Naive thymus-derived CD4-positive, alpha-beta T cell (primary cell): ENCODE measurements at regions of chr17 and their contacts with region 1.

Region 1: DNA sequence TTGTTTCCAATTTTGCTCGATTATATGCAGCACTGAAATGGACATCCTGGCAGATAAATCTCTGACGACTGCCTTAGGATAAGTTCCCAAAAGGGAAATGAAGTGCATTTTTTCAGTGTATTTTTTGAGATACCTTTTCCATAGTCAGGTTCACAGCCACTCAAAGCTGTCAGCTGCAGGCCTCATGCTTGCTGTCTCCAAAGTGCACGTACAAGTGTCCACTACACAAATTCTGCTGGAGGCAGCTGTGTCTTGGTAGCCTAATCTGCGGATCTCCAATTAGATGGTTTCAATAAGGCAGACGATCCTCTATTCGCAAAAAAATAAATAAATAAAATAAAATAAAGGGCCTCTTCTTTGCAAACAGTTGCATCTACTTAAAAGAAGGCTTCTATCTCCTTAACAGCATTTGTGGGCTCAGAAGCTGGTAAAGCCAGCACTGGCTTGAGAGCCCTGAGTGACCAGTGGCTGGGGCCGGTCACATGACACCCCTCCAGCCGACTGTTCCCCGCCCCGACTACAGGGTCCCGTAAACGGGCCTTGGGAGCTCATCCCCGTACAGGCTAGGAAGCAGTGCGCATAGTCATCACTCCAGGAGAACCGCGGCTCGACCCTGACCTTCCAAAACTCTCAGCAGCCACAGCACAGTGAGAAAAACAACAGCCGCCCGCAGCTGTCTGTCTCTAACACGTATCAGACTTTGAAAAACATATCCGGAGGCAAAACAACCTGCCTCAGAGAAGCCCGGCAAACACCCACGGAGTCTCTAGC is 18.8 kb downstream of the RPH3AL start:
- DNase-seq: peak in 5 of 9 donors; percentile 34 to 60 (median 35)
- ATAC-seq: peak; percentile 40
- H3K4me3 ChIP-seq: no peak overlapping the region
- H3K4me3 Mint-ChIP-seq: peak overlapping the region in 8 of 10 donors; percentile 52 to 91 (median 81)
- H3K27ac ChIP-seq: peak overlapping the region; percentile 65
- H3K27ac Mint-ChIP-seq: peak overlapping the region in 7 of 9 donors; percentile 93 to 98 (median 95)
- H3K4me1 ChIP-seq: peaks cover 0 to 51% of the 10 kb centered on the region in 2 donors
- H3K4me1 Mint-ChIP-seq: peaks cover 14 to 86% (median 34%) of the 10 kb centered on the region in 7 donors
- H3K27me3 ChIP-seq: no peaks in the 10 kb centered on the region
- H3K27me3 Mint-ChIP-seq: peaks cover 0 to 32% (median 15%) of the 10 kb centered on the region in 5 donors

Region 2: GRCh38 chr17:259991-260791 is 73.6 kb before region 1 on chr17:
- CTCF ChIA-PET with region 1: no interaction called
- POLR2A ChIA-PET with region 1: no interaction called
- intact Hi-C with region 1: no loop called
- DNase-seq: peak in 1 of 9 donors; percentile 15
- ATAC-seq: no peak
- H3K4me3 ChIP-seq: no peak overlapping the region
- H3K4me3 Mint-ChIP-seq: no peak overlapping the region
- H3K27ac ChIP-seq: no peak overlapping the region
- H3K27ac Mint-ChIP-seq: peak overlapping the region in 1 of 9 donors; percentile 55
- H3K4me1 ChIP-seq: no peaks in the 10 kb centered on the region
- H3K4me1 Mint-ChIP-seq: peaks cover 0 to 3% (median 0%) of the 10 kb centered on the region in 7 donors
- H3K27me3 ChIP-seq: no peaks in the 10 kb centered on the region
- H3K27me3 Mint-ChIP-seq: peaks cover 0 to 11% (median 2%) of the 10 kb centered on the region in 5 donors

Region 3: GRCh38 chr17:313911-314613 is 19.7 kb before region 1 on chr17:
- CTCF ChIA-PET with region 1: interaction called, 3 read pairs
- POLR2A ChIA-PET with region 1: no interaction called
- intact Hi-C with region 1: loop called in 1 of 2 experiments (anchors 2 kb)
- DNase-seq: peak in 2 of 9 donors; percentile 14 to 26
- ATAC-seq: no peak
- H3K4me3 ChIP-seq: no peak overlapping the region
- H3K4me3 Mint-ChIP-seq: no peak overlapping the region
- H3K27ac ChIP-seq: no peak overlapping the region
- H3K27ac Mint-ChIP-seq: no peak overlapping the region
- H3K4me1 ChIP-seq: no peaks in the 10 kb centered on the region
- H3K4me1 Mint-ChIP-seq: peaks cover 0 to 6% (median 0%) of the 10 kb centered on the region in 7 donors
- H3K27me3 ChIP-seq: no peaks in the 10 kb centered on the region
- H3K27me3 Mint-ChIP-seq: no peaks in the 10 kb centered on the region

Region 4: GRCh38 chr17:364766-365165 is 31.0 kb after region 1 on chr17:
- CTCF ChIA-PET with region 1: interaction called, 4 read pairs
- POLR2A ChIA-PET with region 1: no interaction called
- intact Hi-C with region 1: loop called in 1 of 2 experiments (anchors 5 kb)
- DNase-seq: no peak
- ATAC-seq: no peak
- H3K4me3 ChIP-seq: no peak overlapping the region
- H3K4me3 Mint-ChIP-seq: peak overlapping the region in 6 of 10 donors; percentile 22 to 56 (median 30)
- H3K27ac ChIP-seq: no peak overlapping the region
- H3K27ac Mint-ChIP-seq: peak overlapping the region in 4 of 9 donors; percentile 3 to 65 (median 59)
- H3K4me1 ChIP-seq: peaks cover 4 to 17% of the 10 kb centered on the region in 2 donors
- H3K4me1 Mint-ChIP-seq: peaks cover 0 to 48% (median 32%) of the 10 kb centered on the region in 7 donors
- H3K27me3 ChIP-seq: no peaks in the 10 kb centered on the region
- H3K27me3 Mint-ChIP-seq: peaks cover 0 to 19% (median 0%) of the 10 kb centered on the region in 5 donors